Esophagus muscularis mucosa (tissue), 4 donors: ENCODE measurements at regions of chr11 and their contacts with region 1.

Region 1: DNA sequence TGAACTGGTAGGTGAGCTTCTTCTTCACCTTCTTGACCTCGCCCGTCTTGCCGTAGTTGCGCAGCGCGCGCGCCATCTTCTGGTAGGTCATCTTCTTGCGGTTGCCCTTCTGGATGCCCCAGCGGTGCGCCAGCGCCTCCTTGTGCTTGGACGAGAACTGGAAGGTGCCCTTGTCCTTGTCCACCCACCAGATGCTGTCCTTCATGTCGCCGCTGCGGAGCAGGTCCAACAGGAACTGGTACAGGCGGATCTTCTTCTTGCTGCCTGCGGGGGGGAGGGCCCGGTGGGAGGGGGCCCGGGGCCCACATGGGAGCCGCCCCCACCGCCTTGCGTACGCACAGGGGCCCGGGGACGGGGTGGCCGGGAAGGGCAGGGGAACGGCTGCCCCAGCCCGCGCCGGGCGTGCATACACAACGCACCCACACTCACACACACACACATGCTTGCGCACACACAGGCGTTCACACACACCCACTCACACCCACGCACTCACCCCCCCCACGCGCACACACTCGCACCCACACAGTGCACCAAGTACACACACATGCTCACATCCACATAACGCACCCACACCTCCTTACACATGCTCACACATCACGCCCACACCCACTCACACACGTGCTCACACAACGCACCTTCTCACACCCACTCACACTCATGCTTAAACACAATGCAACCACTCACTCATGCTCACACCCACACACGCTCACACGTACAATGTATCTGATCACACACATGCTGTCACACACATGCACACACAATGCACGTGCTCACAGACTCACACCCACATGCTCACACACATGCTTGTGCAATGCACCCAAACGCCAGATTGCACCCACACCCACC is 3.0 kb upstream of the MYBPC3 start:
- DNase-seq: peak; percentile 96
- H3K4me3 ChIP-seq: peak overlapping the region; percentile 55 to 66 (median 60)
- H3K27ac ChIP-seq: peak overlapping the region; percentile 76 to 86 (median 79)
- H3K4me1 ChIP-seq: peaks cover 7 to 22% (median 21%) of the 10 kb centered on the region in 4 donors
- H3K27me3 ChIP-seq: no peaks in the 10 kb centered on the region
- CTCF ChIP-seq: peak; percentile 96 to 97 (median 96)
- EP300 ChIP-seq: no peak
- POLR2A ChIP-seq: no peak

Region 2: GRCh38 chr11:46889689-46890475 is 465.6 kb before region 1 on chr11:
- intact Hi-C with region 1: loop called (anchors 10 kb)
- DNase-seq: peak; percentile 95
- H3K4me3 ChIP-seq: no peak overlapping the region
- H3K27ac ChIP-seq: no peak overlapping the region
- H3K4me1 ChIP-seq: no peaks in the 10 kb centered on the region
- H3K27me3 ChIP-seq: no peaks in the 10 kb centered on the region
- CTCF ChIP-seq: peak; percentile 84 to 93 (median 88)
- EP300 ChIP-seq: no peak
- POLR2A ChIP-seq: no peak

Region 3: GRCh38 chr11:46948378-46949131 is 407.0 kb before region 1 on chr11:
- intact Hi-C with region 1: no loop called
- DNase-seq: no peak
- H3K4me3 ChIP-seq: no peak overlapping the region
- H3K27ac ChIP-seq: no peak overlapping the region
- H3K4me1 ChIP-seq: peaks cover 0 to 16% (median 0%) of the 10 kb centered on the region in 4 donors
- H3K27me3 ChIP-seq: no peaks in the 10 kb centered on the region
- CTCF ChIP-seq: no peak
- EP300 ChIP-seq: no peak
- POLR2A ChIP-seq: no peak

Region 4: DNA sequence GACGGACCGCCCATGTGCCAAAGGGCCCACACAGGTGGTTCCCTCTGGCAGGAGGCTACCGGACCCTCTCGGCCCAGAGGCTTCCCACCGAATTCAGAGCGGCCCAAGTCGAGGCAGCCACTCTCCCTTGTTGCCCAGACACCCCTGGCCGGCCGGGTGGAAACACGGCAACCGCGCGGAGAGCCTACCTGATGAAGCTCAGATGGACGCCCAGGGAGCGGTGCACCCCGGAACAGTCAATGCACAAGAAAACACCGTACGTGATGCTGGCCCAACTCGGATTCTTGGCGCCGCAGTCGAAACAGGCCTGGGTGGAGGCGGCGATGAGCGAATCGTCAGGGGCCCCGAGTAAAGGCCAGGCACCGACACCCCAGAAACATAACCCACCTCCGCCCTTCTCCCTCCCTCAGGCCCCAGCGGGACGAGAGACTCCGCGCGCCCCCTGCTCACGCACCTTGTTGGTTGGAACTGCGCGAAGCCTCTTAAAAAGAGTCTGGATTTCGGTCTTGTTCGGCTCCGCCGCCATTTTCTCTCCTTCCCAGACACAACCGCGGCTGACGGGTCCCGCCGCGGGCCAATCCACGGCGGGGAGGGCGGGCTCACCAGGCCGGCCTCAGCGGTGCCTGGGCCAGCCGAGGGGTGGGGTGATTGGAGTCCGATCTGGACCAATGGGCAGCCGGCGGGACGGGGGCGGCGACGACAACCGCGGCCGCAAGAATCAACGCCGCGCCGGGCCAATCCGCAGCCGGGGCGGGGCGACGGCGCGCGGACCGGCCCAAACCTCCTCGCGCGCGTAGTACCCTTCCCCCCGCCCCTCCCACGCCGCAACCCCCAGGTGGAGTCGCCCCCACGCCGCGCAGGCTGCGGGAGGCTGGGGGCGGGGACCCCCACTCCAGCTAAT is 178.9 kb before region 1 on chr11 and contains the start of gene ARFGAP2:
- intact Hi-C with region 1: loop called (anchors 5 kb)
- DNase-seq: peak; percentile 99
- H3K4me3 ChIP-seq: peak within 1 kb of the TSS; percentile 72 to 99 (median 86)
- H3K27ac ChIP-seq: peak within 1 kb of the TSS; percentile 98 to 99 (median 98)
- H3K4me1 ChIP-seq: peaks cover 57 to 68% (median 65%) of the 10 kb centered on the region in 4 donors
- H3K27me3 ChIP-seq: no peaks in the 10 kb centered on the region
- CTCF ChIP-seq: no peak
- EP300 ChIP-seq: no peak
- POLR2A ChIP-seq: no peak
- total RNA-seq, gene ARFGAP2: 92.5 to 141 (median 120) TPM

Region 5: DNA sequence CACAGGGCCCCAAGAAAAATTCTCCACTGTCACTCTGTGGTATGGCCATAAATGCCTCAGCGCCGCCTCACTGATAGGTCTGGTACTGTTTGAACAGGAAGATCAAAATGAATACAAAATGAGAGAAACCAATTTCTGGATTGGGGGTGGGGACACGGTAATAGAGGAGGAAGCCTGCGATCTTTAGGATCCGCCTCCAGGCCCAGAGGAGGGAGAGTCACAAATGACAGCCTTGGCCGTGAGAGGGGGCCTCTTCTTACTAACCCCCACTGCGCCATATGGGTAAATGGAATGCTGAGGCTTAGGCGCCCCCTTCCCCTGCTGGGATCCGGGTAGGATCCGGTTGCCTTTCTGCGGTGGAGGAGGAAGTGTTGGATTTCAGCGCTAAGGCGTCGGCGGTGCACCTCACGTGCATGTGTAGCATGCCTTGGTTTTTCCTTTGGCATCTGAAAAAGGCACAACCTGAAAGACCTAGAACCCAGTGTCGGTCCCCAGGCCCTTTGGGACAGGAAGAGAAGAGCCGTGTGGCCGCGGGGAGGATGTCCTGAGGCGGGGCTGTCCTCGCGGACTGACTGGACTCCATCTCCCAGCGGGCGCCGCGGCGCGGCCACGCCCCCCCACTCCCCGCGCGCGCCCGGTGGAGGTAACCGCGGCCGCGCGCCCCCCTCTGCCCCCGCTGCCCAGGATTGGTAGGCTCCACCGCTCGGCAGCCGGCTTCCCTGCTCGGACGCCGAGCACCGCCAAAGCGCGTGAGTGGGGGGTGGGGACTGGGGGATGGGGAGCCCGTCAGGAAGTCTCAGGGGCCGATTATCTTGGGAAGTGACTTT is 86.3 kb before region 1 on chr11:
- intact Hi-C with region 1: loop called (anchors 10 kb)
- DNase-seq: peak; percentile 95
- H3K4me3 ChIP-seq: peak overlapping the region; percentile 72 to 93 (median 81)
- H3K27ac ChIP-seq: peak overlapping the region; percentile 90 to 98 (median 96)
- H3K4me1 ChIP-seq: peaks cover 39 to 48% (median 46%) of the 10 kb centered on the region in 4 donors
- H3K27me3 ChIP-seq: no peaks in the 10 kb centered on the region
- CTCF ChIP-seq: peak in 1 of 3 experiments; percentile 29
- EP300 ChIP-seq: no peak
- POLR2A ChIP-seq: no peak